ENCODE measurements at regions of chr16 and their contacts with region 1.

Region 1: DNA sequence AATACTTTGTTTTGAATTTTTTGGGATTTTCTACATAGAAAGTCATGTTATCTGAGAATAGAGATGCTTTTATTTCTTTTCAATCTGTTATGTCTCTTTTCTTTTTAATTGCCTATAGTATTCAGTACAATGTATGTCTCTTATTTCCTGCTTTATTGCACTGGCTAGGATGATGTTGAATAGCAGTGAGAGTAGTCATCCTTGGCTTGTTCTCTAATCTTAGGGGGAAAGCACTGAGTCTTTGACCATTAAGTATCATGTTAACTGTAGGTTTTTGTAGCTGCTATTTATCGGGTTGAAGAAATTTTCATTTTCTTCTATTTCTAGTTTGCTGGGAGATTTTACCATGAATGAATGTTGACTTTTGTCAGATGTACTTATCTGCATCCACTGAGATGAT is 10.0 kb upstream of the ABCA3 start:
- DNase-seq: no peak
- ATAC-seq: no peak
- H3K4me3 ChIP-seq: no peak overlapping the region
- H3K27ac ChIP-seq: no peak overlapping the region
- H3K4me1 ChIP-seq: 0 out of 4 replicates have a peak, but pooled peaks cover 0 to 4% of the 10 kb centered on the region in 2 experiments
- H3K27me3 ChIP-seq: no peaks in the 10 kb centered on the region
- CTCF ChIP-seq: no peak
- POLR2A ChIP-seq: no peak
- RAD21 ChIP-seq: no peak

Region 2: DNA sequence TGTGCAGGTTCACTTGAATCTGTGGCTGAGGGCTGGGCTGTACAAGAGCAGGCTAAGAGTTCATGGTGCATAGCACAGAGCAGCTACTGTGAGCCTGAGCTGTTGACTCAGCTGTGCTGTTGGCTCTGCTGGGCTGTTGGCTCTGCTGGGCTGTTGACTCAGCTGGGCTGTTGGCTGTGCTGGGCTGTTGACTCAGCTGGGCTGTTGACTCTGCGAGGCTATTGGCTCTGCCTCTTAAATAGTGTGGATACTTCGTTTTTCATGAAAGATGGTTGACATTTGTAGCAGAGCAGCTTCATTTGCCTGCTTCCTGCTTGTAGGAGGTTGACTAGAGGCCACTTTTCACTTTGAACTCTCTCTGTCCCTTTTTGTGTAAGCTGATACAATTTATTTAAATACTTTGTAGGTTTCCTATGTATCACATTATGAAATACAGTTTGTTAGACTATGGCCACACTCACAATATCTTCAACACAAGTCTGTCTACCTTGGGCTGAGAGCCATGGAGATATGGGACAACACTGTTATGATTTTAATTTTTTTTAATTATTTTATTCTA is 38.5 kb after region 1 on chr16:
- CTCF ChIA-PET with region 1: no interaction called
- POLR2A ChIA-PET with region 1: no interaction called
- RAD21 ChIA-PET with region 1: no interaction called
- intact Hi-C with region 1: loop called (anchors 5 kb)
- DNase-seq: no peak
- ATAC-seq: no peak
- H3K4me3 ChIP-seq: no peak overlapping the region
- H3K27ac ChIP-seq: no peak overlapping the region
- H3K4me1 ChIP-seq: no peaks in the 10 kb centered on the region
- H3K27me3 ChIP-seq: no peaks in the 10 kb centered on the region
- CTCF ChIP-seq: no peak
- POLR2A ChIP-seq: no peak
- RAD21 ChIP-seq: no peak

Region 3: DNA sequence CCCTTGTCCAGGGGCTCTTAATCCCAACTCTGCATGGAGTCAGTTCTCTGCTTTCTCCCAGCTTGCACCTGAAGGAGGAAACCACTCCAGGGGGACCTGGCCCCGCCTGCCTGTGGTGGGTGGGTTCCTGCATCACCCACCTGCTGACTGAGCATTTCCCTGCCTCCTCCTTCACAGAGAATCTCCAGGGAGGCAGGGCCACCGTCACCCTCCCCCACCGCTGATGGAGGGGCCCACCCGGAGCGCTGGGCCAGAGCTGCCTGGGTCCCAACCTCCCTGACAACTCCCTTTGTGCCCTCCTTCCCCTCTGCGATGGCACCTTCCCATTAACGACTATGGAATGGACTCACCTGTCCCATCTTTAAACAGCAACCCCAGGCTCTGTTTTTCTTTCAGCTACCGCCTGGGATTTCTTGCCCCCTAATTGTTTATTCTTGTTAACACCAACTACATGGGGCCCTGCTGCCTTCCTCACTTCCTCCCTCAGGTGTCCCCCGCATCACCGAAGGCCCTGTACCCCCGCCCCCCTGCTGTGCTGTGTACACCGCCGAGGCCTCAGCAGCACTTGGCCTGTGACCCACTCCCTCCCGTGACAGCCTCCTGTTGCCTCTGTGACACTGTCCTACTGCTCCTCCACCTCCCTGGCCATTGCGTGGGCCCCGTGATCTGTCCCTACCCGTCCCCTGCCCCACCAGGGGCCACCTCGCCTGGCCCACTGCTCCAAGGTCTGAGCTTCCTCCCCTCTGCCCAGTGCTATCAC is 108.6 kb after region 1 on chr16:
- CTCF ChIA-PET with region 1: no interaction called
- POLR2A ChIA-PET with region 1: no interaction called
- RAD21 ChIA-PET with region 1: no interaction called
- intact Hi-C with region 1: no loop called
- DNase-seq: no peak
- ATAC-seq: peak; percentile 8
- H3K4me3 ChIP-seq: peak overlapping the region; percentile 64 to 75
- H3K27ac ChIP-seq: peak overlapping the region; percentile 66
- H3K4me1 ChIP-seq: peaks cover 6 to 34% of the 10 kb centered on the region in 2 experiments; a peak in 3 of 4 replicates
- H3K27me3 ChIP-seq: no peaks in the 10 kb centered on the region
- CTCF ChIP-seq: no peak
- POLR2A ChIP-seq: peak; percentile 24
- RAD21 ChIP-seq: no peak

Measured in HCT116 (cell line).